ENCODE measurements at regions of chr16 and their contacts with region 1.

Region 1: GRCh38 chr16:23149349-23149996 is at the start of gene USP31:
- DNase-seq: peak; percentile 98
- H3K4me3 ChIP-seq: peak within 1 kb of the TSS; percentile 79 to 91 (median 84)
- H3K27ac ChIP-seq: peak within 1 kb of the TSS; percentile 84 to 95 (median 90)
- H3K4me1 ChIP-seq: peaks cover 25 to 49% (median 47%) of the 10 kb centered on the region in 4 donors
- H3K27me3 ChIP-seq: peaks cover 0 to 4% (median 0%) of the 10 kb centered on the region in 4 donors
- CTCF ChIP-seq: no peak
- EP300 ChIP-seq: no peak
- POLR2A ChIP-seq: no peak
- total RNA-seq, gene USP31: 18.9 to 29.1 (median 23.3) TPM

Region 2: GRCh38 chr16:23071196-23072083 is 78.0 kb before region 1 on chr16:
- intact Hi-C with region 1: loop called (anchors 2 kb)
- DNase-seq: peak; percentile 86
- H3K4me3 ChIP-seq: peak overlapping the region in 2 of 4 donors; percentile 6 to 29
- H3K27ac ChIP-seq: peak overlapping the region; percentile 72 to 80 (median 76)
- H3K4me1 ChIP-seq: peaks cover 24 to 48% (median 36%) of the 10 kb centered on the region in 4 donors
- H3K27me3 ChIP-seq: no peaks in the 10 kb centered on the region
- CTCF ChIP-seq: no peak
- EP300 ChIP-seq: no peak
- POLR2A ChIP-seq: no peak